ENCODE measurements at regions of chr6 and their contacts with region 1.

Region 1: GRCh38 chr6:138673346-138674014 is 100.1 kb upstream of the CCDC28A start:
- DNase-seq: no peak
- ATAC-seq: no peak
- H3K4me3 ChIP-seq: no peak overlapping the region
- H3K27ac ChIP-seq: no peak overlapping the region
- H3K4me1 ChIP-seq: no peaks in the 10 kb centered on the region
- H3K27me3 ChIP-seq: no peaks in the 10 kb centered on the region
- CTCF ChIP-seq: no peak
- EP300 ChIP-seq: no peak
- POLR2A ChIP-seq: no peak
- RAD21 ChIP-seq: no peak

Region 2: DNA sequence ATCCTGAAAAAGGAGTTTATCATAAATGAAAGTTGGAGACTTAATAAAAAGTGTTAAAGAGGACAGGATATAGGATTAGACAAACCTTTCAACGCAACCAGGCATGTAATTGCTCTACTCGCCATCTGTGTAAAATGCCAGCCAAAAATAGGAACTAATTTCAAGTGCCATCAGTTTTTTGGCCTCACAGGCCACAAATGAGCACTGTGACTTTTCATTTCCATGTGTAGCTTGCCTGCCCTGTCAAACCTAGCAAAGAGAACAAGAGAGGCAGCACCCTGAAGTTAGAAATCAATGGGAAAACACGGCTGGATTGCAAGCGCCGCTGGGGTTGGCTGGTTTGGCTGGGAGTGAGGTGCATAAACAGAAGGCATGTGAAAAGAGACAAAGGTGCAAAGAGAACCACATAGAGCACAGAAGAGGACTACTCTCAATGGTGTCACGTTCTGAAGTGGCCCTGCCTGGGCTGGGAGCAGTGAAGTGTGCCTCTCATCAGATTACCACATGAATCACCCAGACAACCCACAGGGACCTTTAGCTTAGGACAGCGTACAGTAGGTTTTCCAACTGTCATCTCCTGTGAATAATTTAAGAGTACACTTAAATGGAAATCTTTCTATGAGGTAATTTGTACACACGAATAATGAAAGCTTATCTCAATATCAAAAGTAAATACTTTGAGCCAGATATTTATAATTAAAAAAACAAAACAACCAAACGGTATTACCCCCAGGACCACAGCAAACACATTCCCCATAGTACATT is 96.1 kb before region 1 on chr6:
- CTCF ChIA-PET with region 1: no interaction called
- POLR2A ChIA-PET with region 1: no interaction called
- RAD21 ChIA-PET with region 1: no interaction called
- SMC1A ChIA-PET with region 1: no interaction called
- in situ Hi-C with region 1: no loop called
- intact Hi-C with region 1: no loop called
- DNase-seq: peak; percentile 16
- ATAC-seq: peak; percentile 99
- H3K4me3 ChIP-seq: no peak overlapping the region
- H3K27ac ChIP-seq: no peak overlapping the region
- H3K4me1 ChIP-seq: no peaks in the 10 kb centered on the region; the same call in 1 of the 2 replicates
- H3K27me3 ChIP-seq: no peaks in the 10 kb centered on the region
- CTCF ChIP-seq: no peak
- EP300 ChIP-seq: no peak
- POLR2A ChIP-seq: no peak
- RAD21 ChIP-seq: no peak

Region 3: GRCh38 chr6:138654715-138655634 is 18.5 kb before region 1 on chr6:
- CTCF ChIA-PET with region 1: interaction called, 23 read pairs
- POLR2A ChIA-PET with region 1: interaction called, 4 read pairs
- RAD21 ChIA-PET with region 1: interaction called, 6 read pairs
- SMC1A ChIA-PET with region 1: interaction called, 28 read pairs
- in situ Hi-C with region 1: no loop called
- intact Hi-C with region 1: no loop called
- DNase-seq: peak; percentile 50
- ATAC-seq: peak; percentile 98
- H3K4me3 ChIP-seq: no peak overlapping the region
- H3K27ac ChIP-seq: no peak overlapping the region
- H3K4me1 ChIP-seq: peaks cover 9% of the 10 kb centered on the region
- H3K27me3 ChIP-seq: no peaks in the 10 kb centered on the region
- CTCF ChIP-seq: no peak
- EP300 ChIP-seq: peak; percentile 71 to 95; a peak in 3 of 4 replicates
- POLR2A ChIP-seq: no peak
- RAD21 ChIP-seq: no peak

Region 4: GRCh38 chr6:138912308-138912707 is 238.8 kb after region 1 on chr6:
- CTCF ChIA-PET with region 1: no interaction called
- POLR2A ChIA-PET with region 1: no interaction called
- RAD21 ChIA-PET with region 1: no interaction called
- SMC1A ChIA-PET with region 1: no interaction called
- in situ Hi-C with region 1: no loop called
- intact Hi-C with region 1: no loop called
- DNase-seq: no peak
- ATAC-seq: peak; percentile 65
- H3K4me3 ChIP-seq: no peak overlapping the region
- H3K27ac ChIP-seq: no peak overlapping the region
- H3K4me1 ChIP-seq: no peaks in the 10 kb centered on the region
- H3K27me3 ChIP-seq: no peaks in the 10 kb centered on the region
- CTCF ChIP-seq: peak in 1 of 3 experiments; percentile 18; a peak in 2 of 6 replicates
- EP300 ChIP-seq: 0 out of 4 replicates have a peak, but pooled peaks of 1 of the 2 experiments have one; percentile 15
- POLR2A ChIP-seq: no peak
- RAD21 ChIP-seq: no peak; the same call in 1 of the 2 replicates

Measured in GM12878 (cell line).